Ascending aorta (tissue), 2 donors: ENCODE measurements at regions of chr13 and their contacts with region 1.

Region 1: GRCh38 chr13:101452519-101453485 is at the start of gene ITGBL1:
- DNase-seq: peak in 1 of 2 donors; percentile 71
- H3K4me3 ChIP-seq: peak within 1 kb of the TSS; percentile 59 to 77
- H3K27ac ChIP-seq: peak within 1 kb of the TSS; percentile 90 to 95
- H3K4me1 ChIP-seq: peaks cover 3 to 28% of the 10 kb centered on the region in 2 donors
- H3K27me3 ChIP-seq: no peaks in the 10 kb centered on the region
- CTCF ChIP-seq: no peak
- total RNA-seq, gene ITGBL1: 47.1 TPM

Region 2: GRCh38 chr13:101144808-101145419 is 307.9 kb before region 1 on chr13:
- intact Hi-C with region 1: loop called (anchors 5 kb)
- DNase-seq: no peak
- H3K4me3 ChIP-seq: no peak overlapping the region
- H3K27ac ChIP-seq: no peak overlapping the region
- H3K4me1 ChIP-seq: no peaks in the 10 kb centered on the region
- H3K27me3 ChIP-seq: no peaks in the 10 kb centered on the region
- CTCF ChIP-seq: peak; percentile 49 to 74 (median 71)

Region 3: GRCh38 chr13:101382086-101382485 is 70.7 kb before region 1 on chr13:
- intact Hi-C with region 1: loop called (anchors 5 kb)
- DNase-seq: no peak
- H3K4me3 ChIP-seq: peak overlapping the region in 1 of 2 donors; percentile 35
- H3K27ac ChIP-seq: peak overlapping the region in 1 of 2 donors; percentile 28
- H3K4me1 ChIP-seq: peaks cover 0 to 3% of the 10 kb centered on the region in 2 donors
- H3K27me3 ChIP-seq: no peaks in the 10 kb centered on the region
- CTCF ChIP-seq: no peak

Region 4: GRCh38 chr13:101424381-101425155 is 28.2 kb before region 1 on chr13:
- intact Hi-C with region 1: no loop called
- DNase-seq: no peak
- H3K4me3 ChIP-seq: no peak overlapping the region
- H3K27ac ChIP-seq: no peak overlapping the region
- H3K4me1 ChIP-seq: no peaks in the 10 kb centered on the region
- H3K27me3 ChIP-seq: no peaks in the 10 kb centered on the region
- CTCF ChIP-seq: no peak

Region 5: DNA sequence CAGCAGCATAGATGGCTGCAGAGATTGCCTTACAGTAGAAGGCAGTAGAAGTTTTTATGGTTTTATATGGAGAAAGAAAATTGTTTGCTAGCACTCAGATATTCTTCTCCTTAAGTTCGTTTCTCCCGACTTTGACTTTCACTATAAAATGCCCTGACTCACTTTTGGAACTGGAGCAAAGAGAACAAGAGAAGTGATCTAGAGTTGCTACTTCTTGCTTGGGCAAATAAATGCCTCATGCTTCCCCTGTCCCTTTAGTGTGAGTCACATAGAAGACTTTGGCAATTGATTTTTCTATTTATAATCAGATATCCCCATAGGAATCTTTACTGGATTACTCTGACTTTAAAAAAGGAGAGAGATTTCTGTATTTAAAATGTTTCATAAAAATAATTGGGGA is 46.6 kb after region 1 on chr13:
- intact Hi-C with region 1: loop called (anchors 5 kb)
- DNase-seq: no peak
- H3K4me3 ChIP-seq: peak overlapping the region in 1 of 2 donors; percentile 52
- H3K27ac ChIP-seq: peak overlapping the region; percentile 82 to 83
- H3K4me1 ChIP-seq: peaks cover 0 to 6% of the 10 kb centered on the region in 2 donors
- H3K27me3 ChIP-seq: no peaks in the 10 kb centered on the region
- CTCF ChIP-seq: no peak

Region 6: GRCh38 chr13:101556676-101557123 is 103.9 kb after region 1 on chr13:
- intact Hi-C with region 1: loop called (anchors 5 kb)
- DNase-seq: peak in 1 of 2 donors; percentile 72
- H3K4me3 ChIP-seq: no peak overlapping the region
- H3K27ac ChIP-seq: peak overlapping the region; percentile 15 to 68
- H3K4me1 ChIP-seq: peaks cover 0 to 29% of the 10 kb centered on the region in 2 donors
- H3K27me3 ChIP-seq: no peaks in the 10 kb centered on the region
- CTCF ChIP-seq: no peak